Tibial artery (tissue), 4 donors: ENCODE measurements at regions of chr1 and their contacts with region 1.

Region 1: GRCh38 chr1:41416552-41417334 is 55.5 kb downstream of the FOXO6 start:
- DNase-seq: peak in 1 of 2 donors; percentile 76
- H3K4me3 ChIP-seq: no peak overlapping the region
- H3K27ac ChIP-seq: no peak overlapping the region
- H3K4me1 ChIP-seq: peaks cover 6 to 19% (median 12%) of the 10 kb centered on the region in 4 donors
- H3K27me3 ChIP-seq: peaks cover 0 to 8% of the 10 kb centered on the region in 2 donors
- CTCF ChIP-seq: peak; percentile 92 to 93

Region 2: DNA sequence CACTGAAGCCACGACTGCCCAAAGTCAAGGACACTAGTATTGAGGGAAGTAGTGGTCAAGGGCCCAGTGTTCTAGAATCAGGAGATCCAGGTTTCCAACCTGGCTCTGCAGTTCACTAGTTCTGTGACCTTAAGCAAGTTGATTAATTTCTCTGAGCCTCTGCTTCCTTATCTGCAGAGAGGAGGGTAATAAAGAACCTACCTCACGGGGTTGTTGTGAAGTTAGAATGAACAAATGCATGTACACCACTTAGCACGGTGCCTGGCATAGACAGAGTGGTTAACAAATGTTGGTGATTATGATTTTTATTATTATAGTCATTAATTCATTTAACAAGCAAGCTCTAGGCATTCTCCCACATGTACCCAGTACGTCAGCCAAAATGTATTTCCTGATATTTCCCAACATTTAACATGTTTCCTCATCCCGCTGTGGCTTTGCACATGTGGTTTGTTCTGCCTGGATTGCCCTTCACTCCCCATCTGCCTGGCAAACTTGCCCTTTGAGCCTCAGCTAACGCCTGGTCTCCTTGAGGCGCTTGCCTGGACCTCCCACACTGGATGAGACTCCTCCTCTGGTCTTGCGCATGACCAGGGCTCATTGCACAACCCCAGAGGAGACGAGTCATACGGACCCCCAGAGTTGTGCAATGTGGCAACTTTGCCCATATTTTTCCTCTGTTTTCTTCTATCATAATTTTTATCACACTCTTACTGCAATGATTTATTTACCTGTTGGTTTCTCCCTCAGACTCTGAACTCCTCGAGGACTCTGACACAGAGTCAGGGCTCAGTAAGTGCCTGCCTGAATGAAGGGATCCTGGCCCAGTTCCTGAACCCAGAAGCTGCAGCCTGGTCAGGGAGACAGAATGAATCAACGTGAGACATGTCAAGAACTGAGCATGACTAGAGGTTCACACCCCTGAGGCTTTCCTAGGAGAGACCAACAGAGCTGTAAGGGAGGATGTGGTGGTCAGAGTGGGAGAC is 1482.5 kb before region 1 on chr1:
- intact Hi-C with region 1: no loop called
- DNase-seq: peak; percentile 88 to 89
- H3K4me3 ChIP-seq: no peak overlapping the region
- H3K27ac ChIP-seq: no peak overlapping the region
- H3K4me1 ChIP-seq: peaks cover 0 to 8% (median 0%) of the 10 kb centered on the region in 4 donors
- H3K27me3 ChIP-seq: peaks cover 0 to 3% of the 10 kb centered on the region in 2 donors
- CTCF ChIP-seq: no peak

Region 3: GRCh38 chr1:41268154-41268770 is 148.5 kb before region 1 on chr1:
- intact Hi-C with region 1: loop called (anchors 2 kb)
- DNase-seq: peak; percentile 64 to 82
- H3K4me3 ChIP-seq: no peak overlapping the region
- H3K27ac ChIP-seq: no peak overlapping the region
- H3K4me1 ChIP-seq: no peaks in the 10 kb centered on the region
- H3K27me3 ChIP-seq: no peaks in the 10 kb centered on the region
- CTCF ChIP-seq: peak; percentile 98 to 100

Region 4: DNA sequence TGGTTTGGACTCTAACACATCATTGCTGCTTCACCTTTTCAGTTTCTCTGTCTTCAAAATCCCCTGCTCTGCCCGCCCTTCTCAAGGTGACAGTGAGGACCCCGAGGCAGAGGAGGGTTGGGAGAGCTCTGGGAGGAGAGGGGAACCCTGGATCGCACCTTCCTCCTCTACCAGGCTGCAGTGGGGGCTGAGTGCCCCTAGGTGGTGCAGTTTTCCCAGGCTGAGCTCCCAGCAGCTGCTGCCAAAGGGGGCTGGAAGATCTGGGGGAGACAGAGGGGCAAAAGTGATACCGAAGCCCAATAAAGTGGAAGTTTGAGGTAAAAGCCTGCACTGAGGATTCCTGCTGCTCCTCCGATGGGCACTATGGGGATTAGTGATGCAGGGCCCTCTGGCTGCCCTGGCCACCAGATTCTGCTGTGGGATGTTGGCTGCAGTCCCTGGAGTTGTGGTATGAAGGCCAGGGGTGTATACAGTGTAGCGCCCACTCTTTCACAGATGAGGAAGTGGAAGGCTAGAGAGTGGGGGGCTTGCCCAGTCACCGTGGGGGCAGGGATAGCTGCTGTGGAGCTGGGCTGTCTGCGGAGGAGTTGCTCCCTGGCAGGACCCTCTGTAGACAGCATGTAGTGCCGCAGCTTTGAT is 133.9 kb before region 1 on chr1:
- intact Hi-C with region 1: loop called (anchors 5 kb)
- DNase-seq: peak in 1 of 2 donors; percentile 26
- H3K4me3 ChIP-seq: no peak overlapping the region
- H3K27ac ChIP-seq: no peak overlapping the region
- H3K4me1 ChIP-seq: peaks cover 0 to 4% (median 0%) of the 10 kb centered on the region in 4 donors
- H3K27me3 ChIP-seq: peaks cover 0 to 58% of the 10 kb centered on the region in 2 donors
- CTCF ChIP-seq: peak; percentile 82 to 86